ENCODE measurements at regions of chr1 and their contacts with region 1.

Region 1: DNA sequence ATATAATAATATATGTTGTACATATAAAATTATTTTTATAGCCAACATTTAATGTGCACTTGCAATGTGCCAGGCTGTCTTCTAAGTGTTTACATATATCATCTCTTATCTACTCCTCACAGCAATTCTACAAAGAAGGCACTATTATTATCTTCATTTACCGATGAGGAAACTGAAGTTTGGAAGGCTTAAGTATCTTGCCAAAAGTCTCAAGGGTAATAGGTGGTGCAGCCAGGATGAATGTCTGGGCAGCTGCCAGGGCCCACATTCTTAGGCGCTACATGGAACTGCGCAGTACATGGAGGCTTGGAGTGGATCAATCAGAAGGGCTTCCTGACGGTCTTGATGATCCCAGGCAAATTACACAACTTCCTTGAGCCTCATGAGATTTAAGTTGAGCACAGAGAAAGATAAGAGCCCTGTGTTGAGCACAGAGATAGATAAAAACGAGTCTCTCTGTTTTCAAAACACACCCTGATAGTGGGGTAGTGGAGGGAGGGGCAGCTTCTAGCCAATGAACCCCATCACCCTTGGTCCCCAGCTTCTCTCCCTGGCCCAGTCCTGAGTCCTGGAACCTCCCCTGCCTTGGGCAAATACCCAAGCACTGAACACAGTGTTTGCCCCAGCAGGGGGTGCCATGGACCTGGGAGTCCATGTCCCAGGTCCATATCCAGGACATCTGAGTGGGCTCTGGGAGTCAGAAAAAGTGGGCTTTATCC is 9.2 kb downstream of the POU3F1 start:
- DNase-seq: no peak
- ATAC-seq: peak; percentile 84
- H3K4me3 ChIP-seq: no peak overlapping the region
- H3K27ac ChIP-seq: no peak overlapping the region
- H3K4me1 ChIP-seq: no peaks in the 10 kb centered on the region
- H3K27me3 ChIP-seq: peaks cover 6 to 33% of the 10 kb centered on the region in 2 experiments; a peak in 4 of 5 replicates
- CTCF ChIP-seq: peak; percentile 81
- EP300 ChIP-seq: no peak
- POLR2A ChIP-seq: no peak
- RAD21 ChIP-seq: peak; percentile 65

Region 2: GRCh38 chr1:37883671-37884070 is 153.7 kb before region 1 on chr1:
- CTCF ChIA-PET with region 1: no interaction called
- POLR2A ChIA-PET with region 1: no interaction called
- in situ Hi-C with region 1: no loop called
- intact Hi-C with region 1: no loop called
- DNase-seq: no peak
- ATAC-seq: no peak
- H3K4me3 ChIP-seq: no peak overlapping the region
- H3K27ac ChIP-seq: no peak overlapping the region
- H3K4me1 ChIP-seq: peaks cover 10% of the 10 kb centered on the region
- H3K27me3 ChIP-seq: no peaks in the 10 kb centered on the region
- CTCF ChIP-seq: no peak
- EP300 ChIP-seq: no peak
- POLR2A ChIP-seq: no peak
- RAD21 ChIP-seq: no peak

Region 3: GRCh38 chr1:38006008-38006828 is 31.2 kb before region 1 on chr1:
- CTCF ChIA-PET with region 1: no interaction called
- POLR2A ChIA-PET with region 1: no interaction called
- in situ Hi-C with region 1: no loop called
- intact Hi-C with region 1: no loop called
- DNase-seq: no peak
- ATAC-seq: peak; percentile 31
- H3K4me3 ChIP-seq: peak overlapping the region; percentile 54 to 87 (median 72)
- H3K27ac ChIP-seq: peak overlapping the region; percentile 23
- H3K4me1 ChIP-seq: peaks cover 52% of the 10 kb centered on the region
- H3K27me3 ChIP-seq: no peaks in the 10 kb centered on the region; a peak in 1 of 5 replicates
- CTCF ChIP-seq: no peak
- EP300 ChIP-seq: no peak
- POLR2A ChIP-seq: no peak
- RAD21 ChIP-seq: no peak

Region 4: DNA sequence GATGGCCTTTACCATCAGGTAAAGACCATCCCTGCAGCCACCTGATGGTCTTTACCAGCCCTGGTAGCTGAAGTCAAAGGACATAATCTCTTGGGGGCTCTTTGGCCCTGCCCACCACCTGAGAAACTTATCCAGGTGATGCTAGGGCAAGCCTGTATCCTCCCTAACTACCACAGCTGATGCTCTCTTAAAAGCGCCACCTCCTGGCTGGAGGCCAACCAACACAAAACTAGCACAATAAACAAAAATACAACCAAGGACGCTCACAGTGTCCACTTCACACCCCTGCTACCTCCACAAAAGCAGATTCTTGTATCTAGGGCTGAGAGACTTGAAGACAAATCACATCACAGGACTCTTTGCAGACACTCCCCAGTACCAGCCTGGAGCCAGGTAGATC is 366.3 kb after region 1 on chr1:
- CTCF ChIA-PET with region 1: interaction called, 4 read pairs
- POLR2A ChIA-PET with region 1: no interaction called
- in situ Hi-C with region 1: no loop called
- intact Hi-C with region 1: loop called (anchors 5 kb)
- DNase-seq: no peak
- ATAC-seq: no peak
- H3K4me3 ChIP-seq: no peak overlapping the region
- H3K27ac ChIP-seq: no peak overlapping the region
- H3K4me1 ChIP-seq: no peaks in the 10 kb centered on the region
- H3K27me3 ChIP-seq: no peaks in the 10 kb centered on the region
- CTCF ChIP-seq: peak; percentile 58
- EP300 ChIP-seq: no peak
- POLR2A ChIP-seq: no peak
- RAD21 ChIP-seq: no peak